ENCODE measurements at regions of chr16 and their contacts with region 1.

Region 1: GRCh38 chr16:81623363-81624102 is 155.6 kb upstream of the PLCG2 start:
- DNase-seq: peak; percentile 46 to 63
- H3K4me3 ChIP-seq: no peak overlapping the region
- H3K27ac ChIP-seq: no peak overlapping the region
- H3K4me1 ChIP-seq: peaks cover 28% of the 10 kb centered on the region
- H3K27me3 ChIP-seq: no peaks in the 10 kb centered on the region
- CTCF ChIP-seq: peak; percentile 85

Region 2: DNA sequence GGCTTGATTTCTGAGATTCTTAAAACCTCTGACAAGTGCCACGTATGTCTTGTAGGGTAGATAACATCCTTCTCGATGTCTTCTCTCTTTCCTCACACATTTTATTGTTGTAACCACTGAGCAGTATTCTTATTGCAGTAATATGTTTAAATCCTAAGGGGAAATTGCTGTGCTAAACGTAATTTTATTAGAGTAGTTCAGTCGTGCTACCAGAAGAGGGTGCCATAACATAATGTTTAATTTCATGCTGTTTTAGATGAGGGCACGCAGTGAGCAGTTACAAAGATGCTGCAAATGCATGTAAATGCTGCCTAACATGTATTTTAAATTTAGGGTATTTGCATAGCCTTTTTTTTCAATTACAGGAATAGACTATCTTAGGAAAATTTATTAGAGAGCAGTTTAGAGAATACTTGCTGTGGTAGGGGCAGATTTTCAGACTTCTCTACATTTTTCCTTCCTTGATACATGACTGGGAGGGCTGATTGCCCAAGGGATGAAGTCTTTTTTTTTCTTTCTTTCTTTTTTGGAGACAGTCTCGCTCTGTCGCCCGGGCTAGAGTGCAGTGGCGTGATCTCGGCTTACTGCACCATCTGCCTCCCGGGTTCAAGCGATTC is 257.1 kb before region 1 on chr16:
- CTCF ChIA-PET with region 1: no interaction called
- POLR2A ChIA-PET with region 1: no interaction called
- intact Hi-C with region 1: no loop called
- DNase-seq: no peak
- H3K4me3 ChIP-seq: no peak overlapping the region
- H3K27ac ChIP-seq: no peak overlapping the region
- H3K4me1 ChIP-seq: no peaks in the 10 kb centered on the region
- H3K27me3 ChIP-seq: no peaks in the 10 kb centered on the region
- CTCF ChIP-seq: peak; percentile 91

Region 3: DNA sequence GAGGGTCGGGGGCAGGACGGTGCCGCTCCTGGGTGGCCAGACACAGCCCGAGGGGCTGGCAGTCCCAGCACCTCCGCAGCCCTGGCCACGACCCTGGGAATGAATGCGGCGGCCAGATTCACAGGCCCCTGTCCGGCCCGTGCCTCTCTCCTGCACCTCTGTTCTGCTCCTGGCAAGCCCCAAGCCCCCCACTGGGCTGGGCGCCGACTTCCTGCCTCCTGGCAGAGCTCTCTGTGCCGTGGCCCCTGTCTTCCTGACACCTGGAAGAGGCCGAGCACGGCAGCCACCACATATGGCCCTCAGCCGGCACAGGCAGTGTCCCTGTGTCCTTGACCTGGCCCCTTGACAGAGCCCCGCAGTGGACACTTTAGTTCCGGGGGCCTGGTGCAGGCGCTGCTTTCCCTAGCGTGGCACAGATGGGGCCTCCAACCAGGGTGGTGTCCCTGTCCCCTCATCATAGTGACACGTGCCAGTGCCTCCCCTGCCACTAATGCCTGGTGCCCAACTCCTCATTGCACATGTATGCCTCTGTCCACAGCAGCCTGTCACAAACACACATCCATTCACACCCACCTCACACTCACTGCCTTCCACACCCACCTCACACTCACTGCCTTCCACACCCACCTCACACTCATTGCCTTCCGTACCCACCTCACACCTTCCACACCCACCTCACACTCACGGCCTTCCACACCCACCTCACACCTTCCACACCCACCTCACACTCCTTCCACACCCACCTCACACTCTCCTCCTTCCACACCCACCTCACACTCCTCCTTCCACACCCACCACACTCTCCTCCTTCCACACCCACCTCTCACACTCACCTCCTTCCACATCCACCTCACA is 44.9 kb after region 1 on chr16:
- CTCF ChIA-PET with region 1: no interaction called
- POLR2A ChIA-PET with region 1: no interaction called
- intact Hi-C with region 1: no loop called
- DNase-seq: no peak
- H3K4me3 ChIP-seq: no peak overlapping the region
- H3K27ac ChIP-seq: no peak overlapping the region
- H3K4me1 ChIP-seq: no peaks in the 10 kb centered on the region
- H3K27me3 ChIP-seq: no peaks in the 10 kb centered on the region
- CTCF ChIP-seq: no peak

Region 4: GRCh38 chr16:81723098-81723723 is 99.7 kb after region 1 on chr16:
- CTCF ChIA-PET with region 1: no interaction called
- POLR2A ChIA-PET with region 1: no interaction called
- intact Hi-C with region 1: loop called (anchors 2 kb)
- DNase-seq: peak; percentile 38 to 74
- H3K4me3 ChIP-seq: no peak overlapping the region
- H3K27ac ChIP-seq: no peak overlapping the region
- H3K4me1 ChIP-seq: no peaks in the 10 kb centered on the region
- H3K27me3 ChIP-seq: no peaks in the 10 kb centered on the region
- CTCF ChIP-seq: peak; percentile 80

Measured in PC-9 (cell line).